ENCODE measurements at regions of chr20 and their contacts with region 1.

Region 1: DNA sequence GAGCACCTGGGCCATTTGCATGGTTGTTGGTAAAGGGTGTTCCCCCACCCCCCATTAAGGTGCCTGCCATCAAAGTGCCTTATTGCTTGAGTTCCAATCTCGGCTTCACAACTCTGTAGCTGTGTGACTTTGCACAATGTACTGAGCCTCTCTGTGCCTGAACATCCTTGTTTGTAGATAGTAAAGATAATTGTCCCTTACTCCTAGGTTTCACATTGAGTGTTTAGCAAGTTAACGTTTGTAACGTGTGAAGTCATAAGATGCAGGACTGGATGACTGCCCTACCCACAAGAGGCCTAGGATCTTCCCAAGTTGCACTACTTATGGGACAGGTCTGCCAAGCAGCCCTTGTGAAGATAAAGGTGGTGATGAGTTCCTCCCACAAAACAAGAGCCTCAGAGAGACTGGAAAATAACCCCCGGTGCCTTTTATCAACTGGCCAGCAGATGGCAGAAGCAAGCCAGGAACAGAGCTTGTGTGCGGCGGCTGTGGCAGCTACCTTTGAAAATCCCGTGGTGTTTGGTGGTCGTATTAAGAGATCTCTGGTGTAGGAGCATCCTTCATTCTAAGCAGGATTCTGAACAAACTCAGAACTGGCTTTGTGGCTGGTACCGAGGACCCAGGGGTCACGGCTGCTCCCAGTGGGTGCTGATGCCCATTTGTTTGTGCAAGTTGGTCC is 99.0 kb downstream of the CDH26 start:
- DNase-seq: peak; percentile 80
- H3K4me3 Mint-ChIP-seq: peak overlapping the region; percentile 76
- H3K27ac Mint-ChIP-seq: peak overlapping the region; percentile 79
- H3K4me1 Mint-ChIP-seq: peaks cover 57% of the 10 kb centered on the region
- H3K27me3 Mint-ChIP-seq: peaks cover 14% of the 10 kb centered on the region

Region 2: GRCh38 chr20:60137629-60138245 is 80.5 kb after region 1 on chr20:
- CTCF ChIA-PET with region 1: interaction called, 13 read pairs
- DNase-seq: peak; percentile 48
- H3K4me3 Mint-ChIP-seq: no peak overlapping the region
- H3K27ac Mint-ChIP-seq: peak overlapping the region; percentile 46
- H3K4me1 Mint-ChIP-seq: peaks cover 13% of the 10 kb centered on the region
- H3K27me3 Mint-ChIP-seq: peaks cover 9% of the 10 kb centered on the region

Region 3: DNA sequence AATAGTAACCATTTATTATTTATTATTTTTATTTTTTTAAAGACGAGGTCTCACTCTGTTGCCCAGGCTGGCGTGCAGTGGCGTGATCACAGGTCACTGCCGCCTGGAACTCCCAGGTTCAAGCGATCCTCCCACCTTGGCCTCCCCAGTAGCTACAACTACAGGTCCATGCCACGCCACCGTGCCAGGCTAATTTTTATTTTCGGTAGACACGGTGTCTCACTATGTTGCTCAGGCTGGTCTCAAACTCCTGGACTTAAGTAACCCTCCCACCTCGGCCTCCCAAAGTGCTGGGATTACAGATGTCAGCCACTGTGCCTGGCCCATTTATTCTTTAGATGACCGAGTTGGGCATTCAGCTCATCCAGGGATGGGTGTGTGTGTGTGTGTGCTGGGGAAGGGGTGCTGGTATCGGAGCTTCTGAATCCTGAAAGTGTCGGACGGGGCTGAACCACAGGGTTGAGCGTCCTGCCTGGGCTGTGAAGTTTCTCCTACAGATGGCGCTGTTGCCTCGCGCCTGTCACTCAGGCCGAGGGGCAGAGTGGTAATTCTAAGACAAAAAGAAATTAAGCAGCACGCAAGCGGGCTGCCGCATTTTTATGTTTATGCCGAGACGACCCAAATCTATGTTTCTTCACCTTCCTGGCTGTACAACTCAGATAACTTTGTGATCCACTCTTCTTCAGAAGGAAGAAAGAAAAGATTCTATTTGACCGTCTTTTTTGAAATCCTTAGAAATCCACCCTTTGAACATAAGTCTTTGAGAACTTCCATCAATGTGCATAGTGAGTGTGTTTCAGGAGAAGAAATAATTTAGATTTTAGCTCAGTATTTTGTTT is 153.7 kb after region 1 on chr20:
- CTCF ChIA-PET with region 1: interaction called, 18 read pairs
- DNase-seq: peak; percentile 70
- H3K4me3 Mint-ChIP-seq: no peak overlapping the region
- H3K27ac Mint-ChIP-seq: no peak overlapping the region
- H3K4me1 Mint-ChIP-seq: no peaks in the 10 kb centered on the region
- H3K27me3 Mint-ChIP-seq: peaks cover 26% of the 10 kb centered on the region

Region 4: GRCh38 chr20:60262967-60263603 is 205.8 kb after region 1 on chr20:
- CTCF ChIA-PET with region 1: interaction called, 54 read pairs
- DNase-seq: peak; percentile 66
- H3K4me3 Mint-ChIP-seq: no peak overlapping the region
- H3K27ac Mint-ChIP-seq: no peak overlapping the region
- H3K4me1 Mint-ChIP-seq: peaks cover 8% of the 10 kb centered on the region
- H3K27me3 Mint-ChIP-seq: peaks cover 7% of the 10 kb centered on the region